ENCODE measurements at regions of chr9 and their contacts with region 1.

Region 1: DNA sequence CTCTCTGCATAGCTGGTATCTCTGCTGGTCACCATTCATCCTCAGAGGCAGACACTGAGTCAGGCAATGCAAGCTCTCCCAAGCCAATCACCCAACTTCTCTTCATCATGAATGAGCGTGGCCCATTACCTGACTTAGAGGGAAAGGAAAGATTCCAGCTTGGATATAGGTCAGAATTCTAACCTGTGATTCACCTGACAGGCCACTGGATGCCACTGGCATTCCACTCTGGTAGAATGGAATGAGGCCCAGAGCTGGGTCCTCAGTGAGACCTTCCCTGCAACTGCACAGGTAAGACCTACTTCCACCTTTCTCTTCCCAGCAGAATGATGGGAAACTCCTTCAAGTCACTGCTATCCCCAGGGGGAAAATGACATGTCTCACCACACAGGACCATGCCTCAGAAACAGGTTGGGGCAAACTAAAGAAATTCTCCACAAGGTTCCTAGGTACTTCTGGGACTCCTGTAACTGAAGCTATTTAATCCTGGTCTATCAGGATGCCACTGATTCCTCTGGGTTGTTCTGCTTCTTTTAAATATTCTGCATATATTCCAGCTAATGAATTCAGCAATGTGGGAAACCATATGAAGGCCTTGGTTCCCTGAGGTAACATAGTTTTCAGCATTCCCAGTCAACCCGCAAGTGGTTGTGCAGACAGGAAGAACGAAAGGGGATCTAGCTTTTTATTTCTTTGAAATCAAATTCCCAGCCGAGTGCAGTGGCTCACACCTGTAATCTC is 62.0 kb downstream of the SUSD1 start:
- DNase-seq: peak; percentile 51 to 71
- ATAC-seq: peak; percentile 88 to 94
- H3K4me3 ChIP-seq: no peak overlapping the region
- H3K27ac ChIP-seq: peak overlapping the region; percentile 74 to 95; a peak in 5 of 6 replicates
- H3K4me1 ChIP-seq: peaks cover 80% of the 10 kb centered on the region
- CTCF ChIP-seq: peak; percentile 83
- EP300 ChIP-seq: no peak
- POLR2A ChIP-seq: no peak
- RAD21 ChIP-seq: peak; percentile 92 to 95

Region 2: GRCh38 chr9:112125951-112126388 is 12.9 kb after region 1 on chr9:
- CTCF ChIA-PET with region 1: interaction called, 21 read pairs
- POLR2A ChIA-PET with region 1: no interaction called
- DNase-seq: peak; percentile 64 to 93
- ATAC-seq: peak; percentile 92
- H3K4me3 ChIP-seq: no peak overlapping the region
- H3K27ac ChIP-seq: peak overlapping the region; percentile 83 to 91
- H3K4me1 ChIP-seq: peaks cover 69% of the 10 kb centered on the region
- CTCF ChIP-seq: no peak
- EP300 ChIP-seq: peak; percentile 90 to 94
- POLR2A ChIP-seq: no peak
- RAD21 ChIP-seq: peak in 1 of 2 experiments; percentile 44; a peak in 2 of 5 replicates

Region 3: DNA sequence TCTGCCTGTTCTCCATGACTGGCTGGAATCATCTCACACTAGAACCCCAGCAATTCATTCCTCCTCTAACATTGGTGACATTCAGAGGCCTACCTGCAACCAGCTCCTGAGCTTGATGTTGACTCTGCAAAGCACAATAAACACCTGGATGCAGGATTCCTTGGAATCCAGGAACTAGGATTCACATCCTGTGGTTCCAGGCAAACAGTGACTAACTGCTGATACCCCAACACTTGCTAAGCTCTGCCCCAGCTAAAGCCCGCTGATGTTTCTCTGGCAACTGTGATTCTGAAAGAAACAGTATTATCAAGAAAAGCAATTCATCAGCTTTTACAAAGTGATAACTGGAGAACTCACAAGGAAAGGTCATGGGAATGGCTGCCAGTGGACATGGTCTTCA is 32.8 kb after region 1 on chr9:
- CTCF ChIA-PET with region 1: interaction called, 18 read pairs
- POLR2A ChIA-PET with region 1: no interaction called
- DNase-seq: peak in 1 of 2 experiments; percentile 64
- ATAC-seq: peak in 1 of 2 experiments; percentile 32; a peak in 2 of 6 replicates
- H3K4me3 ChIP-seq: no peak overlapping the region
- H3K27ac ChIP-seq: peak overlapping the region; percentile 85 to 91
- H3K4me1 ChIP-seq: peaks cover 51% of the 10 kb centered on the region
- CTCF ChIP-seq: no peak
- EP300 ChIP-seq: no peak
- POLR2A ChIP-seq: no peak
- RAD21 ChIP-seq: no peak

Region 4: DNA sequence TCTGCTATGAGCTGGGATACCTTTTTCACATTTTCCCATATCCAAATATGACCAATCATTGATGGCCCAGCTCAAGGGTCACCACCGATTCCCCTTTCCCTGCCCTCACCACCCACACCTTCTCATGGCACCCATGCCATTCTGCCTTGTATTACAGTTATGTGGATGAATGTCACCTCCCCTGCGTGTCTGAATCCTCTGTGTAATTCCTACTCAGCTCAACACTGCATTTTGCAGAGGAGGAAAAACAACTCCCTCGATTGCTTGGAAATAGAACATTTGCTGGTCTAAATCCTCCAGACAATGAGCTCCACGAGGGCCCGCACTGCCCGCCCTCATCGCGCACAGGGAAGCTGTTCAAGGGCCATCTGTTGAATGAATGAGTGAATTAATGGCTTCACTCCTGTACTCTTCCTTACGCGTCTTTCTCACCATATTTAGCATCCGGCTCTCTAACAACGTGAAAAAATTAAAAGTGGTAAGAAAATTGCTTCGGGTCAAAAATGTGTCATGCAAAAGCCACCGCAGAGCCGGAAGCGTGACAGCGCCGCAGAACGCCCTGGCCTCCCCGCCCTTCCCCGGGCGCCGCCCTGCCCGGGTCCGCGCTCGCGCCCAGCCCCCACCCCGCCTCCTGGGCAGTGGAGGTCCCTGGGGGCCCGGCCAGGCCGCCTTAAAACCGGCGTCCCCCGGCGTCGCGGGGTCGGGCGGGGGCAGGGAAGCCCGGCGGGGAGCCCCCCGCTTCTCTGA is 61.3 kb after region 1 on chr9:
- CTCF ChIA-PET with region 1: interaction called, 12 read pairs
- POLR2A ChIA-PET with region 1: interaction called, 3 read pairs
- DNase-seq: peak; percentile 68 to 69
- ATAC-seq: peak; percentile 87 to 89
- H3K4me3 ChIP-seq: peak overlapping the region; percentile 87
- H3K27ac ChIP-seq: peak overlapping the region; percentile 99
- H3K4me1 ChIP-seq: peaks cover 35% of the 10 kb centered on the region
- CTCF ChIP-seq: no peak
- EP300 ChIP-seq: 0 out of 5 replicates have a peak, but pooled peaks of 1 of the 2 experiments have one; percentile 23
- POLR2A ChIP-seq: no peak
- RAD21 ChIP-seq: peak in 1 of 2 experiments; percentile 11; a peak in 1 of 5 replicates

Region 5: GRCh38 chr9:112333639-112334431 is 220.7 kb after region 1 on chr9:
- CTCF ChIA-PET with region 1: interaction called, 12 read pairs
- POLR2A ChIA-PET with region 1: interaction called, 19 read pairs
- DNase-seq: peak; percentile 90 to 95
- ATAC-seq: peak; percentile 68 to 78
- H3K4me3 ChIP-seq: peak overlapping the region; percentile 81
- H3K27ac ChIP-seq: peak overlapping the region; percentile 97
- H3K4me1 ChIP-seq: peaks cover 44% of the 10 kb centered on the region
- CTCF ChIP-seq: peak; percentile 68
- EP300 ChIP-seq: no peak
- POLR2A ChIP-seq: peak; percentile 56
- RAD21 ChIP-seq: peak; percentile 31 to 77

Region 6: DNA sequence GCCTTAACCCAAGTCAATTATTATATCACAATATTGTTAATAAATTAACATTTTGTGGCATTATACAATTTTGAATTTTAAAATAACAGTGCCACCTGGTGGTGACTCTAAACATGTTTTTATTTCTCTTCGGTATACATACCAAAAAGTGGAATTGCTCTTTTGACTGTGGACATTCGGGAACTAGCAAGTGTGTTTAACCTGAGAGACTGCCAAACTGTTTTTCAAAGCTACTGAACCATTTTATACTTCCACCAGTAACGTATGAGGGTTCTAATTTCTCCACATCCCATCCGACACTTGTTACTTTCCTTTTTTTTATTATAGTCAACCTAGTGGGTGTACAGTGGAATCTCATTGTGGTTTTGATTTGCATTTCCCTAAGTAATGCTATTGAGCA is 248.5 kb after region 1 on chr9:
- CTCF ChIA-PET with region 1: interaction called, 64 read pairs
- POLR2A ChIA-PET with region 1: no interaction called
- DNase-seq: peak in 1 of 2 experiments; percentile 60
- ATAC-seq: peak; percentile 59 to 75; a peak in 4 of 6 replicates
- H3K4me3 ChIP-seq: no peak overlapping the region
- H3K27ac ChIP-seq: no peak overlapping the region
- H3K4me1 ChIP-seq: peaks cover 13% of the 10 kb centered on the region
- CTCF ChIP-seq: peak; percentile 67
- EP300 ChIP-seq: no peak
- POLR2A ChIP-seq: no peak
- RAD21 ChIP-seq: peak; percentile 77 to 85

Region 7: GRCh38 chr9:112465352-112465751 is 352.2 kb after region 1 on chr9:
- CTCF ChIA-PET with region 1: no interaction called
- POLR2A ChIA-PET with region 1: no interaction called
- DNase-seq: no peak
- ATAC-seq: no peak
- H3K4me3 ChIP-seq: no peak overlapping the region
- H3K27ac ChIP-seq: no peak overlapping the region
- H3K4me1 ChIP-seq: no peaks in the 10 kb centered on the region
- CTCF ChIP-seq: no peak
- EP300 ChIP-seq: no peak
- POLR2A ChIP-seq: no peak
- RAD21 ChIP-seq: no peak